ENCODE measurements at regions of chr9 and their contacts with region 1.

Region 1: GRCh38 chr9:133149126-133150107 is 14.3 kb downstream of the GBGT1 start:
- DNase-seq: peak; percentile 90 to 92
- H3K4me3 ChIP-seq: peak overlapping the region; percentile 86
- H3K4me3 Mint-ChIP-seq: peak overlapping the region; percentile 72
- H3K27ac Mint-ChIP-seq: peak overlapping the region; percentile 77
- H3K4me1 ChIP-seq: peaks cover 6% of the 10 kb centered on the region
- H3K4me1 Mint-ChIP-seq: peaks cover 4% of the 10 kb centered on the region
- H3K27me3 ChIP-seq: no peaks in the 10 kb centered on the region
- H3K27me3 Mint-ChIP-seq: no peaks in the 10 kb centered on the region
- CTCF ChIP-seq: peak in 1 of 2 experiments; percentile 46

Region 2: GRCh38 chr9:133103183-133103986 is 46.0 kb before region 1 on chr9:
- CTCF ChIA-PET with region 1: interaction called, 10 read pairs
- POLR2A ChIA-PET with region 1: no interaction called
- intact Hi-C with region 1: loop called (anchors 1 kb)
- DNase-seq: peak in 1 of 2 experiments; percentile 76
- H3K4me3 ChIP-seq: no peak overlapping the region
- H3K4me3 Mint-ChIP-seq: no peak overlapping the region
- H3K27ac Mint-ChIP-seq: peak overlapping the region; percentile 32
- H3K4me1 ChIP-seq: no peaks in the 10 kb centered on the region
- H3K4me1 Mint-ChIP-seq: no peaks in the 10 kb centered on the region
- H3K27me3 ChIP-seq: no peaks in the 10 kb centered on the region
- H3K27me3 Mint-ChIP-seq: no peaks in the 10 kb centered on the region
- CTCF ChIP-seq: peak; percentile 91 to 93

Region 3: GRCh38 chr9:133120352-133121197 is 28.8 kb before region 1 on chr9:
- CTCF ChIA-PET with region 1: interaction called, 7 read pairs
- POLR2A ChIA-PET with region 1: interaction called, 4 read pairs
- intact Hi-C with region 1: loop called (anchors 1 kb)
- DNase-seq: peak in 1 of 2 experiments; percentile 34
- H3K4me3 ChIP-seq: peak overlapping the region; percentile 76
- H3K4me3 Mint-ChIP-seq: peak overlapping the region; percentile 64
- H3K27ac Mint-ChIP-seq: peak overlapping the region; percentile 55
- H3K4me1 ChIP-seq: peaks cover 26% of the 10 kb centered on the region
- H3K4me1 Mint-ChIP-seq: peaks cover 24% of the 10 kb centered on the region
- H3K27me3 ChIP-seq: no peaks in the 10 kb centered on the region
- H3K27me3 Mint-ChIP-seq: no peaks in the 10 kb centered on the region
- CTCF ChIP-seq: no peak

Region 4: DNA sequence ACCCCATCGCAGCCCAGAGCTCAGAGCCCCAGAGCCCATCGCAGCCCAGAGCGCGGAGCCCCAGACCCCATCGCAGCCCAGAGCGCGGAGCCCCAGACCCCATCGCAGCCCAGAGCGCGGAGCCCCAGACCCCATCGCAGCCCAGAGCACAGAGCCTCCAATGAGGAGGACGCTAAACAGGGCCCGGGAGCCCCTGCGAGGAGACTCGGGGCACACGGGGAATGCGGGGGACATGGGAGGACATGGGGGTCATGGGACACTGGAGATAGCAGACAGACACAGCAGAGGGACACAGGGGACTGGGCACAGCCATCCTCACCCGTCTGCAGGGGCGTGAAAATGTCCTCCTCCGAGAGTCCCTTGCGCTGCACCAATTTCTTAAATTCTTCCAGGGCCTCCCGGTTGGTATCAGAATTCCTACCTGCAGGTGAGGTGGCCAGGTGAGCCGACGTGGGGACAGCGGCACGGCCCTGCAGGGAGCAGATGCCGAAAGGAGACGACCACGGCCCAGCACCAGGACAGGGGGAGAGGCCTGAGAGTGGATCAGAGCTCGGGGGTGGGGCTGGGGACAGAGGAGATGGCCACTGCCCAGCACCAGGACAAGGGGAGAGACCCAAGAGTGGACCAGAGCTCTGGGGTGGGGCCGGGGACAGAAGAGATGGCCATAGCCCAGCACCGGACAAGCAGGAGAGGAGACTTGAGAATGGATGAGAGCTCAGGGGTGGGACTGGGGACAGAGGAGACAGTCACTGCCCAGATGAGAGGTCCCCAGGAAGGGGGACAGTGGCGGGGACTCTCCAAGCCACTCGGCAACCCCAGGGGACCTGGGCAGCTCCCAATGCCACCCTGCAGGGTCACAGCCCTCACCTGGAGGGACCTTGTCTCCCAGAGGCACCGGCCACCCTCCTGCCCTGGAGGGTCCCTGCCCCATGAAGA is 56.8 kb after region 1 on chr9:
- CTCF ChIA-PET with region 1: no interaction called
- POLR2A ChIA-PET with region 1: no interaction called
- intact Hi-C with region 1: no loop called
- DNase-seq: no peak
- H3K4me3 ChIP-seq: no peak overlapping the region
- H3K4me3 Mint-ChIP-seq: no peak overlapping the region
- H3K27ac Mint-ChIP-seq: no peak overlapping the region
- H3K4me1 ChIP-seq: no peaks in the 10 kb centered on the region
- H3K4me1 Mint-ChIP-seq: no peaks in the 10 kb centered on the region
- H3K27me3 ChIP-seq: no peaks in the 10 kb centered on the region
- H3K27me3 Mint-ChIP-seq: peaks cover 2% of the 10 kb centered on the region
- CTCF ChIP-seq: no peak

Measured in Caco-2 (cell line).